Right cardiac atrium (tissue), 5 donors: ENCODE measurements at regions of chr10 and their contacts with region 1.

Region 1: DNA sequence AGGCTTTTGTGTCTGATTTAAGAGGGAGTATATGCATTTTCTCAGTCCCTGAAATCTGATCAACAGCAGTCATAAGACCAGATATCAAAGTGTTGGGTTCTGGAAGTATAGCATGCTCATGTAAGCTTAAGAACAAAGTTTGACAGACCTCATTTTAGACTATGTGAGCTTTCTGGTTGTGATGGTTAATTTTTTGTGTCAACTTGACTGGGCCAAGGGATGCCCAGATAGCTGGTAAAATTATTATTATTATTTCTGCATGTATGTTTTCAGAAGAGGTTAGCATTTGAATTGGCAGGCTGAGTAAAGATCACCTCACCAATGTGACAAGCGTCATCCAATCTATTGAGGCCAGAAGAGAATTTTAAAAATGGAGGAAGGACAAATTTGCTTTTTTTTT is 63.5 kb upstream of the FRMD4A start:
- DNase-seq: no peak
- ATAC-seq: no peak
- H3K4me3 ChIP-seq: no peak overlapping the region
- H3K27ac ChIP-seq: no peak overlapping the region
- H3K4me1 ChIP-seq: no peaks in the 10 kb centered on the region
- H3K27me3 ChIP-seq: no peaks in the 10 kb centered on the region

Region 2: GRCh38 chr10:14163377-14164086 is 230.6 kb before region 1 on chr10:
- intact Hi-C with region 1: no loop called
- DNase-seq: no peak
- ATAC-seq: no peak
- H3K4me3 ChIP-seq: no peak overlapping the region
- H3K27ac ChIP-seq: no peak overlapping the region
- H3K4me1 ChIP-seq: no peaks in the 10 kb centered on the region
- H3K27me3 ChIP-seq: no peaks in the 10 kb centered on the region

Region 3: GRCh38 chr10:14358886-14359573 is 35.1 kb before region 1 on chr10:
- intact Hi-C with region 1: loop called in 1 of 4 experiments (anchors 2 kb)
- DNase-seq: no peak
- ATAC-seq: no peak
- H3K4me3 ChIP-seq: no peak overlapping the region
- H3K27ac ChIP-seq: no peak overlapping the region
- H3K4me1 ChIP-seq: no peaks in the 10 kb centered on the region
- H3K27me3 ChIP-seq: no peaks in the 10 kb centered on the region